CD8-positive, alpha-beta memory T cell (primary cell): ENCODE measurements at regions of chr2 and their contacts with region 1.

Region 1: GRCh38 chr2:178125125-178125524 is 12.9 kb downstream of the RBM45 start:
- DNase-seq: no peak
- H3K4me3 ChIP-seq: no peak overlapping the region
- H3K4me3 Mint-ChIP-seq: no peak overlapping the region
- H3K27ac ChIP-seq: no peak overlapping the region
- H3K27ac Mint-ChIP-seq: peak overlapping the region in 2 of 8 donors; percentile 0 to 9
- H3K4me1 ChIP-seq: no peaks in the 10 kb centered on the region
- H3K4me1 Mint-ChIP-seq: peaks cover 3 to 13% (median 9%) of the 10 kb centered on the region in 3 donors
- H3K27me3 ChIP-seq: no peaks in the 10 kb centered on the region
- H3K27me3 Mint-ChIP-seq: no peaks in the 10 kb centered on the region

Region 2: GRCh38 chr2:178112202-178113152 is 12.6 kb before region 1 on chr2 and contains the start of gene RBM45:
- CTCF ChIA-PET with region 1: interaction called, 18 read pairs
- POLR2A ChIA-PET with region 1: no interaction called
- DNase-seq: peak; percentile 75 to 88 (median 77)
- H3K4me3 ChIP-seq: peak within 1 kb of the TSS; percentile 88
- H3K4me3 Mint-ChIP-seq: peak within 1 kb of the TSS; percentile 92 to 97 (median 94)
- H3K27ac ChIP-seq: peak within 1 kb of the TSS; percentile 68
- H3K27ac Mint-ChIP-seq: peak within 1 kb of the TSS; percentile 82 to 96 (median 90)
- H3K4me1 ChIP-seq: peaks cover 15% of the 10 kb centered on the region
- H3K4me1 Mint-ChIP-seq: peaks cover 33 to 49% (median 48%) of the 10 kb centered on the region in 3 donors
- H3K27me3 ChIP-seq: no peaks in the 10 kb centered on the region
- H3K27me3 Mint-ChIP-seq: peaks cover 0 to 1% of the 10 kb centered on the region in 2 donors
- total RNA-seq, gene RBM45: 11.9 to 12.7 TPM